Activated CD4-positive, alpha-beta T cell treated with anti-CD3 and anti-CD28 coated beads, Interleukin-2, amount 10 ng/mL, durations not matched to agents 7 days and 5 days (primary cell): ENCODE measurements at regions of chr18 and their contacts with region 1.

Region 1: DNA sequence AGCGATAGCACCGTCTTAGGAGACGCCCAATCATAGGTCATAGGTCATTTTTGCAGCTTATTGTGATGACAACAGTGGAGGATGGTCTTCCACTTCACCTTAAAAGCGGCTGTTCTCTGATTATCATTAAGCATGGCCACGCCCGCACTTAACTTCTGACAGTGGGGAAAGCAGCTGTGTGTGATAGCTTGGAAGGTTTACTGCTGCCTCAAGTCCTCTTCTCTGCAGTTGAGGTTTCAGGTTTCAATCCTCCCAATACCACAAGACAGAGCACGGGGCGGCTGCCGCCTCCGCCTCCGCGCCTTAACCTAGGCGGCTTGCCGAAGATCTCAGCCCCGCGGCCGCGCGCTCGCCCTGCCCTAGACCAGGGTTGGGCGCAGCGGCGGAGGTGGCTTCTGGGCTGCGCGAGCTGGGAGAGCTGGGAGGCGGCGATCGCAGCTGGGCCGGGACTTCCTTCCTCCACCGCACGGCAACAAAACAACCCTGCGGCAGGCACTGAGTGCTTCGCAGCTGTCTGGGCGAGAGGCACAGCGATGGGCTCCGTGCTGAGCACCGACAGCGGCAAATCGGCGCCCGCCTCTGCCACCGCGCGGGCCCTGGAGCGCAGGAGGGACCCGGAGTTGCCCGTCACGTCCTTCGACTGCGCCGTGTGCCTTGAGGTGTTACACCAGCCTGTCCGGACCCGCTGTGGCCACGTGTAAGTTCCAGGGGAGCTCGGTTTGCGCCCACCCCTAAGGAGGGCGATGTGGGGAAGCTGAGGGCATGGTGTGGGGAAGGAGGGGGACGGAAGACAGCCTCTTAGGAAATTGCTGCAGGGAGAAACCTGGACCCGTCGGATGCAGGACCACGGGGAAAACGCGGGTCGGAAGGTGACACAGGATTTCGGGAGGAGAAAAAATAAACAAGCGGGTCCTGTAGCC is at the start of gene RNF125:
- DNase-seq: peak; percentile 95
- H3K4me3 Mint-ChIP-seq: peak within 1 kb of the TSS; percentile 98
- H3K27ac Mint-ChIP-seq: peak within 1 kb of the TSS; percentile 98
- H3K4me1 Mint-ChIP-seq: peaks cover 56% of the 10 kb centered on the region
- H3K27me3 Mint-ChIP-seq: no peaks in the 10 kb centered on the region
- total RNA-seq, gene RNF125: 35.6 to 36.0 TPM

Region 2: DNA sequence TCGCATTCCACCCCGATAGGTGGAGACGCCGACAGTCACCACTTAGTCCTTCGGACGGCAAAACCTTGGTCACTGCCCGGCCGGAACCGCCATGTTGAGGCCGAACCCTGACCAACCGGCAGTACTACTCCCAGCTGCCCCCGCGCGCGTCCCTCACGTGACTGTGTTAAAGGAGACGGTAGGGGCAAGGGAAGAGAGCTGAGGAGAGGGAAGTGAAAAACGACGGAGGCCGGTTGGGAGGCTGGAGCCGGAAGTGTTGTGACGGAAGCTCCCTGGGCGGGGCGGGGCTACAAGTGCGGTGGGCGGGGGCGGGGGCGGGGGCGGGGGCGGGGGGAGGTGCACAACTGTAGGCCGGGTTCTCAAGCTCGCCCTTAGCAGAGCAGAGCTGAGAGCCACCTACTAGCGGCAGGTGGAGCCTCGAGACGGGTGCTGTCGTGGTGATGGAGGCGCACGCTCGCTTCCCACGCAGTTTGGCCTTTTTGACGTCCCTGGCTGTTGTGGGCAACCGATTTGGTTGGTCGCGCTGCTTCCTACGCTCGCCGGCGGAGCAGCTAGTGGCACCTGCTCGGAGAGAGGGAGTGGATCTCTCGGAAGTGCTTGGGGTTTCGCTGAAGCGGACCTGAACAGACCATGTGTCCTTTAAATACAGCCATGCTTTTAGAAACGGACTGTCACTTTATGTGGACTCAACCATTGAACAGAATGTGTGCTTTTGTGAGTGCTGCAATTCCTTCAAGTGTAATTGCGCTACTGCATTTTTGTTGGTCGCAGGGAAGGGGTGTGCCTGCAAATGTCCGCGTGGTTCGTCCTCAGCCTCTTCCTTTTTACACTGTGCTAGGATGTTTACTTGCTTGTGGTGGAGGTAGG is 75.4 kb before region 1 on chr18 and contains the start of gene TRAPPC8:
- CTCF ChIA-PET with region 1: no interaction called
- POLR2A ChIA-PET with region 1: interaction called, 13 read pairs
- DNase-seq: peak; percentile 94
- H3K4me3 Mint-ChIP-seq: peak within 1 kb of the TSS; percentile 99
- H3K27ac Mint-ChIP-seq: peak within 1 kb of the TSS; percentile 99
- H3K4me1 Mint-ChIP-seq: peaks cover 46% of the 10 kb centered on the region
- H3K27me3 Mint-ChIP-seq: no peaks in the 10 kb centered on the region
- total RNA-seq, gene TRAPPC8: 38.7 to 45.9 TPM

Region 3: DNA sequence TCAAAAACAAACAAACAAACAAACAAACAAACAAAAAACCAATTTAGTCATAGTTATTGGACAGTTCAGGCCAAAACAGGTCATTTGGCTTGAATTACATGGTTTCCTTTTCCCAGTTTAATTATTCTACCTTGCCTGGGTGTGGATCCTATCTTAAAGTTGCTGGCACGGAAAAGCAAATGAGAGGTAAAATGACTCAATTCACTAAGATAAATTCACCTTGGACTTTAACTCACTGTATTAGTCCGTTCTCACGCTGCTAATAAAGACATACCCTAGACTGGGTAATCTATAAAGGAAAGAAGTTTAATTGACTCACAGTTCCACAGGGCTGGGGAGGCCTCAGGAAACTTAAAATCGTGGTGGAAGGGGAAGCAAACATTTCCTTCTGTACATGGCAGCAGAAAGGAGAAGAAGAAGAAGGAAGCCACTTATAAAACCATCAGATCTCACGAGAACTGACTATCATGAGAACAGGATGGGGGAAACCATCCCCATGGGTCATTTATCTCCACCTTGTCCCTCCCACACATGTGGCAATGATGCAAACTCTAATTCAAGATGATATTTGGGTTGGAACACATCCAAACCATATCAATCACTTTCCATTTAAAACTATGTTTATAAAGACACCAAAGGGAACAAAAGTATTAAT is 53.1 kb before region 1 on chr18:
- CTCF ChIA-PET with region 1: no interaction called
- POLR2A ChIA-PET with region 1: no interaction called
- DNase-seq: no peak
- H3K4me3 Mint-ChIP-seq: no peak overlapping the region
- H3K27ac Mint-ChIP-seq: no peak overlapping the region
- H3K4me1 Mint-ChIP-seq: no peaks in the 10 kb centered on the region
- H3K27me3 Mint-ChIP-seq: no peaks in the 10 kb centered on the region

Region 4: GRCh38 chr18:32040936-32041335 is 22.3 kb after region 1 on chr18:
- CTCF ChIA-PET with region 1: interaction called, 6 read pairs
- POLR2A ChIA-PET with region 1: interaction called, 11 read pairs
- DNase-seq: peak; percentile 70
- H3K4me3 Mint-ChIP-seq: peak overlapping the region; percentile 65
- H3K27ac Mint-ChIP-seq: peak overlapping the region; percentile 87
- H3K4me1 Mint-ChIP-seq: peaks cover 55% of the 10 kb centered on the region
- H3K27me3 Mint-ChIP-seq: no peaks in the 10 kb centered on the region

Region 5: DNA sequence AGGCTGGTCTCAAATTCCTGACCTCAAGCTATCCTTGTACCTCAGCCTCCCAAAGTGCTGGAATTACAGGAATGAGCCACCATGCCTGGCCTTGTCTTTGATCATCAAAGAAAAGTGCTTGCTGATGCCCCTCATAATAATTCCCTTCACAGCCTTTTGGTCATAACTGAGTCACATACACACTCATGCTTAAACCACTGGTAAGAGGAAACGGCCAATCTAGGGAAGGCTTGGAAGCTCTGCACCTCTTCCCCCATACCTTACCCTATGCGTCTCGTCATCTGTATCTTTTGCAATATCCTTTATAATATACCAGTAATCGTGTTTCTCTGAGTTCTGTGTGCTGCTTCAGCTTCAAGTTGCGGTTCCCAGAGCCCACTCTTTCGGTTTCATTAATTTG is 68.3 kb after region 1 on chr18:
- CTCF ChIA-PET with region 1: interaction called, 3 read pairs
- POLR2A ChIA-PET with region 1: interaction called, 21 read pairs
- DNase-seq: no peak
- H3K4me3 Mint-ChIP-seq: no peak overlapping the region
- H3K27ac Mint-ChIP-seq: no peak overlapping the region
- H3K4me1 Mint-ChIP-seq: peaks cover 58% of the 10 kb centered on the region
- H3K27me3 Mint-ChIP-seq: peaks cover 2% of the 10 kb centered on the region

Region 6: DNA sequence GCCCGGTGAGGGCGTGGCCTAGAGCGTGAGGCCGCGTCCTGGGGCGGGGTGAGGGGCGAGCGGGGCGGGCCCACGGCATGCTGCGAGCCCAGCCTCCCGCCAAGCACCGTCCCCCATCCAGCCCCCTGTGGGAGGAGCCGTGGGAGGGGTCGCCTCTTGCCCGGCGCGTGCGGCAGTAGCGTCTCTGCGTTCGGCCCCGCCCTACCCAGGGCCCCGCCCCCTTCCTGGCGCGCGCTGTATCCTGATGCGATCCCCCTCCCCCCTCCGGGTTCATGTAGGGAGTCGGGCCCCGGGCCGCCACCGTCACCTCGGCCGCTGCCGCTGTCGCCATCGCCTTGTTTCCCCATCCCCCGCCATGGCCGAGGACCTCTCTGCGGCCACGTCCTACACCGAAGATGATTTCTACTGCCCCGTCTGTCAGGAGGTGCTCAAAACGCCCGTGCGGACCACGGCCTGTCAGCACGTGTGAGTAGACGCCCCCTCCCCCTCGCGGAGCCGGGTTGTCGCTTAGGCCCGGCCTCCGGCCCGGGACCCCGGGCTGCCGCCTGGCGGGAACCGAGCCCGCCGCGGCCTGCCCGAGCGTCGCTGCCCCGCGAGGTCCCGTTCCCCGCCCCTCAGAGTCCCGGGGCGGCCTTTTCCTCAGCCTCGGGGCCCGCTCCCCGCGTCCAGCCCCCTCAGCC is 74.0 kb after region 1 on chr18:
- CTCF ChIA-PET with region 1: interaction called, 3 read pairs
- POLR2A ChIA-PET with region 1: interaction called, 13 read pairs
- DNase-seq: peak; percentile 99
- H3K4me3 Mint-ChIP-seq: peak overlapping the region; percentile 98
- H3K27ac Mint-ChIP-seq: peak overlapping the region; percentile 98
- H3K4me1 Mint-ChIP-seq: peaks cover 54% of the 10 kb centered on the region
- H3K27me3 Mint-ChIP-seq: no peaks in the 10 kb centered on the region